GM23248 (cell line): ENCODE measurements at regions of chr1 and their contacts with region 1.

Region 1: GRCh38 chr1:115976062-115976920 is at the start of gene SLC22A15:
- DNase-seq: peak; percentile 80
- H3K4me3 ChIP-seq: peak within 1 kb of the TSS; percentile 88
- H3K27ac ChIP-seq: peak within 1 kb of the TSS; percentile 86
- H3K4me1 ChIP-seq: peaks cover 22% of the 10 kb centered on the region
- H3K27me3 ChIP-seq: no peaks in the 10 kb centered on the region
- total RNA-seq, gene SLC22A15: 14.7 and 15.0 TPM in 2 replicates

Region 2: DNA sequence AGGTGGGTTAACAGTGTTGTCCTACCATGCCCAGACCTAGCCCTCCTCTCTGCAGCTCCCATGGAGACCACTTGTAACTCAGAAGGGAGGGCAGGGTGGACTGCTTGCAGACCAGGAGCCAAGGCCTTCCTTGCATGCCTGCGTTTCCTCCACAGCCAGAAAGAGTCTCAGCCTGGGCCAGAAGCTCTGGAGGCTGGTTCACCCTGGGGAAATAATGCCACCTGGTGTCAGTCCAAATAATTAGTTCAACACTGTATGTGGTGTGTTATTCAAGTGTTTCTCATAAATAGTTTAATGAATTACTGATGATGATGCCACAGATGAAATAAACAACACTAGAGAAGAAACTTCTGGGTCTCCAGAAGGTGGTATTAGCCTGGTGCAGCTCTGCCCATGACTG is 351.4 kb before region 1 on chr1:
- in situ Hi-C with region 1: loop called (anchors 25 kb)
- DNase-seq: no peak
- H3K4me3 ChIP-seq: no peak overlapping the region
- H3K27ac ChIP-seq: no peak overlapping the region
- H3K4me1 ChIP-seq: no peaks in the 10 kb centered on the region
- H3K27me3 ChIP-seq: no peaks in the 10 kb centered on the region

Region 3: DNA sequence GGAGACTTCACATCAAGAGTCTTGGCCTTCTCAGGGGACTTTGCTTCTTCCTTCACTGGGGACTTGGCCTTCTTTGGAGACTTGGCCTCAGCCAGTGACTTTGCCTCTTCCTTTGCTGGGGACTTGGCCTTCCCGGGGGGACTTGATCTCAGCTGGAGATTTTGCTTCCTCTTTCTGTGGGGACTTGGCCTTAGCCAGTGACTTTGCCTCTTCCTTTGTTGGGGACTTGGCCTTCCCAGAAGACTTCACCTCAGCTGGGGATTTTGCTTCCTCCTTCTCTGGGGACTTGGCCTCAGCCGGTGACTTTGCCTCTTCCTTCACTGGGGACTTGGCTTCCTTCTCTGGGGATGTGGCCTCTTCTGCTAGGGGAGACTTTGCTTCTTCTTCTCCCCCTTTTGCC is 764.5 kb after region 1 on chr1:
- in situ Hi-C with region 1: no loop called
- DNase-seq: no peak
- H3K4me3 ChIP-seq: no peak overlapping the region
- H3K27ac ChIP-seq: no peak overlapping the region
- H3K4me1 ChIP-seq: no peaks in the 10 kb centered on the region
- H3K27me3 ChIP-seq: 0 out of 2 replicates have a peak, but pooled peaks cover 3% of the 10 kb centered on the region